ENCODE measurements at regions of chr7 and their contacts with region 1.

Region 1: GRCh38 chr7:102097584-102098161 is 189.0 kb upstream of the SH2B2 start:
- DNase-seq: no peak
- ATAC-seq: no peak
- H3K4me3 ChIP-seq: no peak overlapping the region
- H3K27ac ChIP-seq: no peak overlapping the region
- H3K4me1 ChIP-seq: peaks cover 0 to 19% (median 2%) of the 10 kb centered on the region in 12 donors
- H3K27me3 ChIP-seq: no peaks in the 10 kb centered on the region
- CTCF ChIP-seq: no peak
- POLR2A ChIP-seq: no peak

Region 2: GRCh38 chr7:102030696-102031095 is 67.0 kb before region 1 on chr7:
- intact Hi-C with region 1: no loop called
- DNase-seq: peak in 1 of 5 donors; percentile 2
- ATAC-seq: no peak
- H3K4me3 ChIP-seq: no peak overlapping the region
- H3K27ac ChIP-seq: no peak overlapping the region
- H3K4me1 ChIP-seq: peaks cover 0 to under 1% (median 0%) of the 10 kb centered on the region in 12 donors
- H3K27me3 ChIP-seq: no peaks in the 10 kb centered on the region
- CTCF ChIP-seq: no peak
- POLR2A ChIP-seq: no peak

Region 3: GRCh38 chr7:102236592-102237287 is 139.1 kb after region 1 on chr7:
- intact Hi-C with region 1: loop called in 1 of 10 experiments (anchors 5 kb)
- DNase-seq: peak in 4 of 5 donors; percentile 45 to 64 (median 58)
- ATAC-seq: peak; percentile 73 to 90 (median 79)
- H3K4me3 ChIP-seq: no peak overlapping the region
- H3K27ac ChIP-seq: no peak overlapping the region
- H3K4me1 ChIP-seq: peaks cover 0 to 11% (median 3%) of the 10 kb centered on the region in 12 donors
- H3K27me3 ChIP-seq: no peaks in the 10 kb centered on the region
- CTCF ChIP-seq: peak; percentile 52 to 90 (median 82)
- POLR2A ChIP-seq: no peak

Measured in heart left ventricle (tissue), 16 donors.